Naive thymus-derived CD4-positive, alpha-beta T cell (primary cell): ENCODE measurements at regions of chr17 and their contacts with region 1.

Region 1: GRCh38 chr17:40026816-40027613 is 11.8 kb downstream of the CSF3 start:
- DNase-seq: peak; percentile 54 to 81 (median 69)
- ATAC-seq: peak; percentile 91
- H3K4me3 ChIP-seq: no peak overlapping the region
- H3K4me3 Mint-ChIP-seq: peak overlapping the region in 4 of 10 donors; percentile 14 to 72 (median 36)
- H3K27ac ChIP-seq: no peak overlapping the region
- H3K27ac Mint-ChIP-seq: peak overlapping the region in 2 of 9 donors; percentile 19 to 42
- H3K4me1 ChIP-seq: peaks cover 6 to 26% of the 10 kb centered on the region in 2 donors
- H3K4me1 Mint-ChIP-seq: peaks cover 10 to 24% (median 22%) of the 10 kb centered on the region in 7 donors
- H3K27me3 ChIP-seq: no peaks in the 10 kb centered on the region
- H3K27me3 Mint-ChIP-seq: no peaks in the 10 kb centered on the region

Region 2: GRCh38 chr17:39872751-39873150 is 154.3 kb before region 1 on chr17:
- CTCF ChIA-PET with region 1: interaction called, 7 read pairs
- POLR2A ChIA-PET with region 1: no interaction called
- intact Hi-C with region 1: loop called in 1 of 2 experiments (anchors 1 kb)
- DNase-seq: peak in 1 of 9 donors; percentile 25
- ATAC-seq: peak; percentile 57
- H3K4me3 ChIP-seq: no peak overlapping the region
- H3K4me3 Mint-ChIP-seq: no peak overlapping the region
- H3K27ac ChIP-seq: no peak overlapping the region
- H3K27ac Mint-ChIP-seq: no peak overlapping the region
- H3K4me1 ChIP-seq: no peaks in the 10 kb centered on the region
- H3K4me1 Mint-ChIP-seq: peaks cover 2 to 13% (median 11%) of the 10 kb centered on the region in 7 donors
- H3K27me3 ChIP-seq: no peaks in the 10 kb centered on the region
- H3K27me3 Mint-ChIP-seq: peaks cover 0 to 22% (median 0%) of the 10 kb centered on the region in 5 donors

Region 3: DNA sequence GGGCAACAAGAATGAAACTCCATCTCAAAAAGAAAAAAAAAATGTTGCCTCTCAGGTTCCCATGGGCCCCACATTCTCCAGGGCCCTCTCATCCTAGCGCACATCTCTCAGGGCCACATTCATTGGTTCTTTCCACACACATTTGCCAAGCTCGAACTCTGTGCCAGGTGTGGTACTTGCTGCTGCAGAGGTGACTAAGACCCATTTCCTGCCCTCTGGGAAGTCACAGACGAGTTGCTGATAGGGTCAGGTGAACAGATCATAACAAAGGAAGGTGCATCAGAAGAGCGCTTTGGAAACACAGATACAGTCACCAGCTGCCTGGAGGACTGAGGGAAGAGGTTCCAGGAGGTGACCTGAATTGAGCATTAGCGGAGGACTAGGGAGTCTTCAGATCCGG is 63.2 kb before region 1 on chr17:
- CTCF ChIA-PET with region 1: no interaction called
- POLR2A ChIA-PET with region 1: no interaction called
- intact Hi-C with region 1: loop called in 1 of 2 experiments (anchors 1 kb)
- DNase-seq: peak in 4 of 9 donors; percentile 23 to 40 (median 28)
- ATAC-seq: no peak
- H3K4me3 ChIP-seq: no peak overlapping the region
- H3K4me3 Mint-ChIP-seq: peak overlapping the region in 9 of 10 donors; percentile 2 to 66 (median 39)
- H3K27ac ChIP-seq: no peak overlapping the region
- H3K27ac Mint-ChIP-seq: peak overlapping the region in 8 of 9 donors; percentile 40 to 96 (median 69)
- H3K4me1 ChIP-seq: peaks cover 13 to 28% of the 10 kb centered on the region in 2 donors
- H3K4me1 Mint-ChIP-seq: peaks cover 16 to 51% (median 35%) of the 10 kb centered on the region in 7 donors
- H3K27me3 ChIP-seq: no peaks in the 10 kb centered on the region
- H3K27me3 Mint-ChIP-seq: peaks cover 0 to 16% (median 0%) of the 10 kb centered on the region in 5 donors

Region 4: DNA sequence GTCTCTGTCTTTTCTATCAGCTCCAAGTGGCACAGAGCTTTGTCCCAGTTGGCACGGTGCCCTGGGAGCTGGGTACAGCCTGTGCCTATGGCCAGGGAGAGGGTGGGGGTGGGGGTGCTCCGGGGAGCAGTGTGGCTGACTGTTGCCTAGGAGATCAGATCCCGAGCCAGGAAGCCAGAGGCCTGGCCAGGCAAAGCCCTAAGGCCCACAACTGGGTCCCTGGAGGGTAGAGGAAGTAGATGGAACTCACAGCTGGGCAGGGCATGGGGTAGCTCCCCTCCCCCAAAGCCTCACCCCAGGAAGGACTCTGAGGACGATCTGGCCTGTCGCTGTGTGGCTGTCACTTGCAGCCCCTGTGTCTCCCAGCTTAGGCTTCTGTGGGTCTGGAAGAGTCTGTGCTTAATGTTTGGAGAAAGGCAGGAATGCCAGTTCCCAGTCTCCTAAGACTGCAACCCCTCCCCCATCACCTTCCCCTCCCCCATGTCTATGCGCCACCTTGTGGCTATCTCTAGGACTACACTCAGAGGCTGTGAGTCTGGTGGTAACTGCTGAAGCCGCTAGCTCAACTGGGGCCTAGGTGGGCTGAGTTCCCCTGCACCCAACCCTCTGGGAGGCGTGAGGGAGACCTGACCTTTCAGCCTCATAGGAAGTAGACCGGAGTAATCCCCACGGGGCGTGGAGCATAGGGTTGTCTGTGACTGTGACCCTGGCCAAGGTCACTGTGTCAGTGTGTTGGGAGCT is 48.4 kb after region 1 on chr17:
- CTCF ChIA-PET with region 1: interaction called, 21 read pairs
- POLR2A ChIA-PET with region 1: no interaction called
- intact Hi-C with region 1: no loop called
- DNase-seq: peak; percentile 45 to 80 (median 63)
- ATAC-seq: peak; percentile 93
- H3K4me3 ChIP-seq: no peak overlapping the region
- H3K4me3 Mint-ChIP-seq: peak overlapping the region in 8 of 10 donors; percentile 35 to 78 (median 71)
- H3K27ac ChIP-seq: peak overlapping the region; percentile 18
- H3K27ac Mint-ChIP-seq: peak overlapping the region in 8 of 9 donors; percentile 42 to 89 (median 68)
- H3K4me1 ChIP-seq: peaks cover 13 to 36% of the 10 kb centered on the region in 2 donors
- H3K4me1 Mint-ChIP-seq: peaks cover 7 to 67% (median 36%) of the 10 kb centered on the region in 7 donors
- H3K27me3 ChIP-seq: no peaks in the 10 kb centered on the region
- H3K27me3 Mint-ChIP-seq: no peaks in the 10 kb centered on the region

Region 5: DNA sequence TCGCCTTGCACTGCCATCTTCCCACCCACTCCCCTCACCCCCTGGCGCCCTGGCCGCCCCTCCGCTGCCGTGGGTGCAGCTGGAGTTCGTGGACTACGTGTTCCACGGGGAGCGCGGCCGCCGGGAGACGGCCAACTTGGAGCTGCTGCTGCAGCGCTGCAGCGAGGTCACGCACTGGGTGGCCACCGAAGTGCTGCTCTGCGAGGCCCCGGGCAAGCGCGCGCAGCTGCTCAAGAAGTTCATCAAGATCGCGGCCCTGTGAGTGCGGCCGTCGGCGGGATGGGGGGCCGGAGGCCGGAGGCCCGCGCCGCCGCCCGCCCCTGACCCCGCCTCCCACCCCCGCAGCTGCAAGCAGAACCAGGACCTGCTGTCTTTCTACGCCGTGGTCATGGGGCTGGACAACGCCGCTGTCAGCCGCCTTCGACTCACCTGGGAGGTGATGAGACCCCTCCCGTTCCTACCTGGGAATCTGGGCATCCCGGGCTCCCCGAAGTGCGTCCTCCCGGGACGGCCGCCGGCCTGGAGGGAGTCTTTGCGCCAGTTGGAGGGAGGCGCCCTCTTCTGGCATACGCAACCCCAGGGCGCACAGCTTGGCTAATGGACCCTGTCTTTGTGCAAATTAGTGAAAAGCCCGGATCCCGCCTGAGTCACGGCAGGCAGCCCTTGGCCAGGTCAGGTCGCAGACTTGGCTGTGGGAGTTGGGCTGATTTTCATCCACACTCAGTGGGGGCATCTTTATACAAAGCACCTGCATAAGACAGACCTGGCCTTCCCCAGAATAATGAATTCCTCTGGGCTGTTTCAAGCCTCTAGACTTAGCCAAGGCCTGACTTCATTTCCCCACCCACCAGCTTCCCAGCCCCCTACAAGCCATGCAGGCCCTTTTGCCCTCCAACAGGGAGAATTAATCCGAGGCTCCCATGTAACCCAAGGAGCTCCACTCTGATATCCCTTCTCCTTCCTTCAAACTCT is 164.5 kb after region 1 on chr17:
- CTCF ChIA-PET with region 1: no interaction called
- POLR2A ChIA-PET with region 1: no interaction called
- intact Hi-C with region 1: loop called in 1 of 2 experiments (anchors 1 kb)
- DNase-seq: peak; percentile 36 to 73 (median 52)
- ATAC-seq: peak; percentile 92
- H3K4me3 ChIP-seq: peak overlapping the region; percentile 63
- H3K4me3 Mint-ChIP-seq: peak overlapping the region; percentile 88 to 97 (median 94)
- H3K27ac ChIP-seq: peak overlapping the region; percentile 29
- H3K27ac Mint-ChIP-seq: peak overlapping the region in 4 of 9 donors; percentile 22 to 58 (median 36)
- H3K4me1 ChIP-seq: peaks cover 0 to 3% of the 10 kb centered on the region in 2 donors
- H3K4me1 Mint-ChIP-seq: peaks cover 0 to 27% (median 13%) of the 10 kb centered on the region in 7 donors
- H3K27me3 ChIP-seq: no peaks in the 10 kb centered on the region
- H3K27me3 Mint-ChIP-seq: peaks cover 0 to 4% (median 0%) of the 10 kb centered on the region in 5 donors